CD4-positive, alpha-beta memory T cell (primary cell): ENCODE measurements at regions of chr14 and their contacts with region 1.

Region 1: GRCh38 chr14:52413729-52414408 is 99.8 kb downstream of the PTGER2 start:
- DNase-seq: no peak
- H3K4me3 ChIP-seq: no peak overlapping the region
- H3K4me3 Mint-ChIP-seq: peak overlapping the region; percentile 11 to 78 (median 48)
- H3K27ac ChIP-seq: no peak overlapping the region
- H3K27ac Mint-ChIP-seq: peak overlapping the region in 3 of 7 donors; percentile 9 to 50 (median 24)
- H3K4me1 ChIP-seq: peaks cover 14% of the 10 kb centered on the region
- H3K4me1 Mint-ChIP-seq: peaks cover 16 to 54% (median 22%) of the 10 kb centered on the region in 4 donors
- H3K27me3 ChIP-seq: no peaks in the 10 kb centered on the region
- H3K27me3 Mint-ChIP-seq: no peaks in the 10 kb centered on the region

Region 2: GRCh38 chr14:52402812-52403526 is 10.9 kb before region 1 on chr14:
- CTCF ChIA-PET with region 1: interaction called, 8 read pairs
- POLR2A ChIA-PET with region 1: interaction called, 3 read pairs
- intact Hi-C with region 1: loop called (anchors 2 kb)
- DNase-seq: peak in 4 of 5 donors; percentile 43 to 54 (median 50)
- H3K4me3 ChIP-seq: peak overlapping the region in 1 of 2 donors; percentile 9
- H3K4me3 Mint-ChIP-seq: peak overlapping the region in 6 of 8 donors; percentile 18 to 70 (median 50)
- H3K27ac ChIP-seq: no peak overlapping the region
- H3K27ac Mint-ChIP-seq: peak overlapping the region in 6 of 7 donors; percentile 5 to 33 (median 19)
- H3K4me1 ChIP-seq: peaks cover 67% of the 10 kb centered on the region
- H3K4me1 Mint-ChIP-seq: peaks cover 53 to 73% (median 63%) of the 10 kb centered on the region in 4 donors
- H3K27me3 ChIP-seq: no peaks in the 10 kb centered on the region
- H3K27me3 Mint-ChIP-seq: no peaks in the 10 kb centered on the region

Region 3: GRCh38 chr14:52650774-52651173 is 236.9 kb after region 1 on chr14:
- CTCF ChIA-PET with region 1: no interaction called
- POLR2A ChIA-PET with region 1: no interaction called
- intact Hi-C with region 1: no loop called
- DNase-seq: no peak
- H3K4me3 ChIP-seq: no peak overlapping the region
- H3K4me3 Mint-ChIP-seq: no peak overlapping the region
- H3K27ac ChIP-seq: no peak overlapping the region
- H3K27ac Mint-ChIP-seq: no peak overlapping the region
- H3K4me1 ChIP-seq: no peaks in the 10 kb centered on the region
- H3K4me1 Mint-ChIP-seq: no peaks in the 10 kb centered on the region
- H3K27me3 ChIP-seq: no peaks in the 10 kb centered on the region
- H3K27me3 Mint-ChIP-seq: no peaks in the 10 kb centered on the region